Aorta (tissue), 5 donors: ENCODE measurements at regions of chr10 and their contacts with region 1.

Region 1: DNA sequence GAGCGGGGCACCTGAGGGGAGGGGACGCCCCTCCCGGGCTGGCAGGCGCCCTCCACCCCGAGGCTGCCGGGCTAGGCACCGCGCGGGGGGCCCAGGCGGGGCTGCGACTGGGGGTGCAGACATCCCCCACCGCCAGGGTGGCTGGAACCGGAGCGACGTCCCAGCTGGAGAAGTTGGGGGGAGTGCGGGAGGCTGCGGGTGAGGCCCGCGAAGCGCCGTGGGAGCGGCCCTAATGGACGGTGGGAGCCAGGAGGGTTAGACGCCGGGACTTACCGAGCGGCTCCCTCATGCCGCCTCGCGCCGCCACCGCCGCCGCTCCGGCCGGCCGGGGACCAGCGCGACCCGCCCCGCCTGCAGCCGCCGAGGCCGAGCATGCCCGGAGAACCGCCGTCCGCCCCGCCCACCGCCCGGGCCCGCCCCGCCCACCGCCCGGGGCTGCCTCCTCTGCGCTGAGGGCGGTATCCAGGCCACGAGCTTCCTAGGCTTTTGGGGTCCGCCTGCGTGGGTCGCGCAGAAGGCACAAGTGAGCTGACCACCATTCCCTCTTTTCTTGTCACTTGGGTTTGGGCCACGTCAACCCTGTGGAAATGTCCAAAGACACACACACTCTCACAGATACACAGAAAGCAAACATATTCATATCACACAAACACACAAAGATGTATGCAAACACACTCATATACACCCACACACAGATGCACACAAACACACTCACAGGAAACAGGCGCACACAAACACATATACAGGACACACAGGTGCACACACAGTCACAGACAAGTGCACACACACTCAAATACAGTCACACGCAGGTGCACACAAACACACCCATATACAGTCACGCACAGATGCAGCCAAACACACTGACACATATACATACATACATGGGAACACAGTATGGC is at the start of gene JCAD:
- DNase-seq: peak; percentile 83 to 95
- ATAC-seq: peak; percentile 90
- H3K4me3 ChIP-seq: peak within 1 kb of the TSS; percentile 75 to 99
- H3K27ac ChIP-seq: peak within 1 kb of the TSS; percentile 0 to 73
- H3K4me1 ChIP-seq: no peaks in the 10 kb centered on the region
- H3K27me3 ChIP-seq: no peaks in the 10 kb centered on the region
- total RNA-seq, gene JCAD: 53.0 to 82.4 TPM

Region 2: DNA sequence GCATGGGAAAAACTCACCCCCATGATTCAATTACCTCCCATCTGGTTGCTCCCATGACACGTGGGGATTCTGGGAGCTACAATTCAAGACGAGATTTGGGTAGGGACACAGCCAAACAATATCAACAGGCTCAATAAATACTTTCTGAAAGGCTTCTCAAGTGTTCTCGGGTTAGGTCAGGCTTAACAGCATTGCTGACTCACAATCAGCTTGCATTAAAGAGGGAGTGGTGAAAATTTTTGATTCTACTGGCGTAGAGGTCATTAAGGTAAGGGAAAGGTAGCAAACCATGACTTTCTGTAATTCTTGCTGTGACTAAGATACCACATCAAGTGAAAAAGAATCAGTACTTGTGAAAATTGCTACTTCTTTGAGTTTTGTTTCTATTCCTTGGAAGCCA is 126.5 kb before region 1 on chr10:
- intact Hi-C with region 1: no loop called
- DNase-seq: no peak
- ATAC-seq: no peak
- H3K4me3 ChIP-seq: no peak overlapping the region
- H3K27ac ChIP-seq: no peak overlapping the region
- H3K4me1 ChIP-seq: no peaks in the 10 kb centered on the region
- H3K27me3 ChIP-seq: no peaks in the 10 kb centered on the region

Region 3: GRCh38 chr10:30013757-30014156 is 45.7 kb before region 1 on chr10:
- intact Hi-C with region 1: loop called in 1 of 2 experiments (anchors 5 kb)
- DNase-seq: no peak
- ATAC-seq: no peak
- H3K4me3 ChIP-seq: no peak overlapping the region
- H3K27ac ChIP-seq: peak overlapping the region in 1 of 2 donors; percentile 56
- H3K4me1 ChIP-seq: peaks cover 11 to 12% of the 10 kb centered on the region in 2 donors
- H3K27me3 ChIP-seq: no peaks in the 10 kb centered on the region

Region 4: GRCh38 chr10:30241422-30242110 is 182.1 kb after region 1 on chr10:
- intact Hi-C with region 1: loop called in 1 of 2 experiments (anchors 5 kb)
- DNase-seq: no peak
- ATAC-seq: no peak
- H3K4me3 ChIP-seq: no peak overlapping the region
- H3K27ac ChIP-seq: no peak overlapping the region
- H3K4me1 ChIP-seq: no peaks in the 10 kb centered on the region
- H3K27me3 ChIP-seq: no peaks in the 10 kb centered on the region